ENCODE measurements at regions of chr5 and their contacts with region 1.

Region 1: GRCh38 chr5:177113566-177114424 is 19.8 kb upstream of the NSD1 start:
- DNase-seq: peak; percentile 86
- ATAC-seq: peak; percentile 60
- H3K4me3 Mint-ChIP-seq: no peak overlapping the region
- H3K27ac Mint-ChIP-seq: peak overlapping the region; percentile 60
- H3K4me1 Mint-ChIP-seq: peaks cover 30% of the 10 kb centered on the region
- H3K27me3 Mint-ChIP-seq: no peaks in the 10 kb centered on the region

Region 2: DNA sequence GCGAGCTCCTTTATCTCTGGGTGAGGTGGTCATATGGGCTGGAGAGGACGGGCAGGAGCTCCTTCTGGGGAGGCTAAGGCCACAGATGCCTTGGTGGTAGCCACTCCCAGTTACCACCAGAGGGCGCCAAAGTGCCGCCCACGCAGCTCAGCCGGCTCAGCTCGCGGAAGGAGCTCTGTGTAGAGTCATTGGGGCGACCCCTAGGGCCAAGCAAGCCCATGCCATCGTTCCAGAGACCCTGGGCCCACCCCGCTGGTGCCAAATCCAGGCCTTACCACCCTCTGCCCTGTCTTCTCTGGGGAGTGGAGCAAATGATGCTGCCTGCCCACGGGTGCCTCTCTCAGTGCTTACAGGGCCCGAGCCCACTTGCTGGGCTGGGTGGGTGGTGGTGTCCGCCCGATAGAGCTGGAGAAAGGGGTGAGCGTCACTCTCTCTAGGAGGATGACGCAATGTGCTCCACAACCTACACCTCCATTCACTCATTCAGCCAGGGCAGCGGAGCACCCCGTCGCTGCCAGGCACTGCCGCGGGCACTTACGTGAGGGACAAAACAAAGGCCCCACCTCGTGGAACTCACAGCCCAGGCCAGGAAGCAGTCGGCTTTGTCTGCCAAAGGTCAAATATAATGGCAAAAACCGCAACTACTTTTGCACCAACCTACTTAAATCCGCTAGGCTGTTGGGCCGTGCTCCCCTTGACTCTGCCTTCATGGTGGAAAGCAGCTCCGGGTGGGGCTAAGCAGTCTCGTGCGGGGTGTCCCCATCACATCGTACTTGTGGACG is 452.7 kb before region 1 on chr5:
- CTCF ChIA-PET with region 1: interaction called, 93 read pairs
- DNase-seq: peak; percentile 82
- ATAC-seq: peak; percentile 77
- H3K4me3 Mint-ChIP-seq: no peak overlapping the region
- H3K27ac Mint-ChIP-seq: no peak overlapping the region
- H3K4me1 Mint-ChIP-seq: peaks cover 29% of the 10 kb centered on the region
- H3K27me3 Mint-ChIP-seq: peaks cover 13% of the 10 kb centered on the region

Region 3: GRCh38 chr5:177103523-177104253 is 10.1 kb before region 1 on chr5:
- CTCF ChIA-PET with region 1: interaction called, 12 read pairs
- DNase-seq: no peak
- ATAC-seq: no peak
- H3K4me3 Mint-ChIP-seq: no peak overlapping the region
- H3K27ac Mint-ChIP-seq: no peak overlapping the region
- H3K4me1 Mint-ChIP-seq: no peaks in the 10 kb centered on the region
- H3K27me3 Mint-ChIP-seq: peaks cover 8% of the 10 kb centered on the region

Region 4: DNA sequence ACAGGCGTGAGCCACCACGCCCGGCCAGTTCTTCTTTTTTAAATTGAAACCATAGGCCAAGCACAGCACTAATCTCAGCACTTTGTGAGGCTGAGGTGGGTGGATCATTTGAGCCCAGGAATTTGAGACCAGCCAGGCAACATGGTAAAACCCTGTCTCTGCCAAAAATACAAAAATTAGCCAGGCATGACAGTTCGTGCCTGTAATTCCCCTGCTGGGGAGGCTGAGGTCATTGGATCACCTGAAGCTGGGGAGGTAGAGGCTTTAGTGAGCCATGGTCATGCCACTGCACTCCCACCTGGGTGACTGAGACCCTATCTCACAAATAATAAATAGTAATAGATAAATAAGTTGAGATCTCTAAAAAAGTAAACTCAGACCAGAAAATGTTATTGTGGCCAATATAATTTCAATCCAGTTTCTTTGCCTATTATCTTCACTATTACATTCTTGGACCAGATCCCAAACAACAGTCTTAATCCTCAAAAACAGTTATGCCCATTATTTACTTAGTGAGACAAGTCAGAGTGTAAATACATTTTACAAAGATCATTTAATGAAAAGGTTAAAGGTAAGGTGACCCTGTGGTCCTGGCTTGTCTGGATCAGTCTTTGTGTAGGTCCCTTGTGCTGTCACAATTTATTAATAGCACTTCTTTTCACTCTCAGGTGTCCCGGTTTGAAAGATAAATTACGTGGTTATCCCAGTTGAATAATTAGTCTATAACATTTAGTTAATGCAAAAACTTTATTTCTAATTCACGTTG is 136.1 kb after region 1 on chr5:
- CTCF ChIA-PET with region 1: interaction called, 11 read pairs
- DNase-seq: no peak
- ATAC-seq: no peak
- H3K4me3 Mint-ChIP-seq: no peak overlapping the region
- H3K27ac Mint-ChIP-seq: no peak overlapping the region
- H3K4me1 Mint-ChIP-seq: peaks cover 1% of the 10 kb centered on the region
- H3K27me3 Mint-ChIP-seq: no peaks in the 10 kb centered on the region

Region 5: DNA sequence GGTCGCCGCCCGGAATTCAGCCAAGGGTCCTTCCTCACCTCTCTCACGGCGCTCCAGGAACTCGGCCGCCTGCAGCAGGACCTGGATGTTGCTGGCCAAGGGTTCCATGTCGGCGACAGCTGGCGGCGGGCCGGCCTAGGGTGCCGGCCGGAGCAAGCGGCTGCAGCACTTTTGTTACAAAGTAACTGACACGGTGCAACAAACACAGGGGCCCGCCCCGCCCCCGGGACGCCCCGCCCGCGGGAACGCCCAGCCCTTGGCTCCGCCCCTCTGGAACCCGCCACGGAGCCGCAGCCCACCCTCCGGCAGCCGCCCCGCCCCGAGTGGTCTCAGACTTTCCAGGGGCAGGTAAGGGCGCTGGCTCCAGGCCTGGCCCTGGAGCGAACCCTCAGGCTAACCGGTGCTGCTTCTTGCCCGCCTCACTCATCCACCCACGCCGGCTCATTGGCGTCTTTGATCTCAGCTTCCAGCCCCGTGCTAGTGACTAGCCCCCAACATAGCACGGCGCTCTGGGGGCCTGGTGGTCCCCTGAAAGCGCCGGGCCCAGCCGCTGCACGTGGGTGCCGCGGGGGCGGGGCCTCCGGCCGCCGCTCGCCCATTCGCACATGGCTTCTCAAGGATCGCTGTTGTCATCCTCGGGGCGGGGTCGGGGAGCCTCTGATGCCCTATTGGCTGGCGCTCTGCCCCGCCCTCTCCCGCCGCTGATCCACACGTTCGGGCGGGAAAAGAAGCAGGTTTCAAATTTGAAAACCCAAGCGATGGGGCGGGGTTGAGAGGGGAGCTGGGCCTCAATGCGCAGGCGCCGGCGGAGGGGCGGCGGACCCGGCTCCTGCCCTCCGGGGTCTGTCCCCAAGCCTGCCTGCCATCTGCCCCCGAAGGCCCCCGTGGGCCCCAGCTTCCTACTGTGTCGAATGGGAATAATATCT is 198.2 kb after region 1 on chr5 and contains the start of gene MXD3:
- CTCF ChIA-PET with region 1: interaction called, 79 read pairs
- DNase-seq: peak; percentile 99
- ATAC-seq: peak; percentile 88
- H3K4me3 Mint-ChIP-seq: peak within 1 kb of the TSS; percentile 97
- H3K27ac Mint-ChIP-seq: peak within 1 kb of the TSS; percentile 95
- H3K4me1 Mint-ChIP-seq: peaks cover 52% of the 10 kb centered on the region
- H3K27me3 Mint-ChIP-seq: no peaks in the 10 kb centered on the region
- total RNA-seq, gene MXD3: 60.2 to 117 TPM

Region 6: GRCh38 chr5:177454397-177455035 is 340.7 kb after region 1 on chr5:
- CTCF ChIA-PET with region 1: interaction called, 15 read pairs
- DNase-seq: peak; percentile 93
- ATAC-seq: peak; percentile 60
- H3K4me3 Mint-ChIP-seq: peak overlapping the region; percentile 78
- H3K27ac Mint-ChIP-seq: no peak overlapping the region
- H3K4me1 Mint-ChIP-seq: peaks cover 18% of the 10 kb centered on the region
- H3K27me3 Mint-ChIP-seq: peaks cover 5% of the 10 kb centered on the region

Measured in activated CD8-positive, alpha-beta memory T cell treated with anti-CD3 and anti-CD28 coated beads, Interleukin-2, amount 10 ng/mL, durations not matched to agents 7 days and 5 days (primary cell).